GM18951 (cell line): ENCODE measurements at regions of chr17 and their contacts with region 1.

Region 1: DNA sequence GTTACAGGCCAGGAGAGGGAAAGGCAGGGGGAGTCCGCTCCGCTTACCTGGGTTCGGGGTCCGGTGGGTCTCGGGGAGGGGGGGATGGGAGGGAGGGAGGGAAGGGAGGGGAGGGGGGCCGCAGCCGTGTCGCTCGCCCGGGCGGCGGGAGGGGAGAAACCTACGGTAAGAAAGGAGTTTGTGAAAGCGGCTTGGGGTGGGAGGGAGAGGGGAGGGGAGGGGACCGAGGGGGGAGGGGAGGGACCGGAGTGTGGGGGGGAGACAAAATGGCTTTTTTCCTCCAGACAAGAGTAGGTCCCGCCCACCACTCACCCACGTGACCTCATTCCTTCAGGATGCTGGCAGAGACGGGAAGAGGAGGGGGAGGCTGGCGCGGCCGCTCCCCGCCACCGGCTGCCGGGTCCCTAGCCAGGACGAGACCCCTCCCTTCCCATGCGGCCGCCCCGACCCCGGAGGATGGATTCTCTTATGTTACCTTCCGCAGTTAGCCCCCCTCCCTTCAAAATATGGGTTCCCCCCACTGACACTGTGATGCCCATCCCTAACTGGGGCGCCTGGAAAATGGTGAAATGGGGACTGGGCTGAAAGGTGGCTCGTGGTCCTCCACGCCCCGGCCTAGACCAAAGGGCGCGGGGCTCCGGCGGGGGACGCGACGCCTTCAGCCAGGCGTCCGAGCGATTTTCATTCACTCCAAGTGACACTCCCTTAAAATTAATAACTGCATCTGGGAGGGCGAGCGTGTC is at the start of gene PCGF2:
- POLR2A ChIP-seq: peak; percentile 39

Region 2: DNA sequence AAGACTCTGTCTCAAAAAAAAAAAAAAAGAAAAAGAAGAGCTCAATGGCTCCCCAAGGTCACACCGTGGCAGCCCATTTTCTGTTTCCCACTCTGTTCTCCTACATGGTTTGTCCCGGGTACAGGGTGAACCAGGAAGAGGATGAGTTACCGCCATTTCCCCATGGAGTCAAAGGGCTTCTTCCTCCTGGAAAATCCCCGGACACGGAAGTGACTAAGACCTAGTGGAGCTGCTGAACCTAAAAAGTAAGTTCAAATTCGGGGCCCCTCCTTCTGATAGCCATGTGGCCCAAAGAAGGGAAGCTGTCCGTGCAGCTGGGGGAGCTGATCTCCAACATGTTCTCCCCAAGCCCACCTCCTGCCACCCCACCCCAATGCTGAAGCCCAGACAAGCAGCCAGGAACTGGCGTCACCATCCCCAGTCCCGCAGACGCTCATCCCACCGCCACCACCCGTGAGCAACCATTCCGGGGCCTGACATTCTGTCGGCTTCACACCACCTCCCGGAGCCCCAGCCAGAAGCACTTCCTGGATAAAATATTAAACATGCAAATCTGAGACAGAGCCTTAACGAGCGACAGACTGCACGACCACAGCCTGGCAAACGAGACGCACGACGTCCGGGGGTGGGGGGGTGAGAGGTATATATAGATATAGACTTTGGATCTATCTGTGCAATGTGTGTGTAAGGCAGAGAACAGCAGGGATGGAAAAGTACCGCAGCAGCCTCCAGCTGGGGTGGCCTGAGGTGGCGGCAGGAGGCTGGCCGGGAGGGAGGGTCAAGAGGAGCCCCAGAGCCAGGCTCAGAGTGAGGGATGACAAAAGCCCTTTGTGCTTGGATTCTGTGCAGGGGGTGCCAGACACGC is 91.1 kb before region 1 on chr17:
- in situ Hi-C with region 1: no loop called
- POLR2A ChIP-seq: peak; percentile 46

Region 3: GRCh38 chr17:38674749-38675615 is 73.3 kb before region 1 on chr17 and contains the start of gene EPOP:
- in situ Hi-C with region 1: loop called (anchors 10 kb)
- POLR2A ChIP-seq: peak; percentile 62

Region 4: GRCh38 chr17:38685491-38685890 is 62.8 kb before region 1 on chr17:
- in situ Hi-C with region 1: no loop called
- POLR2A ChIP-seq: no peak